ENCODE measurements at regions of chr2 and their contacts with region 1.

Region 1: GRCh38 chr2:21042958-21043743 is 722 bp downstream of the APOB start:
- DNase-seq: peak; percentile 66 to 77 (median 70)
- ATAC-seq: peak; percentile 91
- H3K4me3 ChIP-seq: no peak overlapping the region
- H3K27ac ChIP-seq: no peak overlapping the region
- H3K4me1 ChIP-seq: peaks cover 0 to 8% of the 10 kb centered on the region in 2 experiments; a peak in 1 of 5 replicates
- H3K27me3 ChIP-seq: peaks cover 2 to 26% of the 10 kb centered on the region in 2 experiments; a peak in 4 of 5 replicates
- CTCF ChIP-seq: peak; percentile 84 to 96 (median 94)
- EP300 ChIP-seq: no peak
- POLR2A ChIP-seq: no peak
- RAD21 ChIP-seq: peak; percentile 94 to 97

Region 2: GRCh38 chr2:21055879-21056790 is 13.0 kb after region 1 on chr2:
- CTCF ChIA-PET with region 1: no interaction called
- POLR2A ChIA-PET with region 1: no interaction called
- in situ Hi-C with region 1: no loop called
- intact Hi-C with region 1: no loop called
- DNase-seq: peak in 1 of 4 experiments; percentile 14
- ATAC-seq: no peak; the same call in 2 of the 3 replicates
- H3K4me3 ChIP-seq: no peak overlapping the region
- H3K27ac ChIP-seq: no peak overlapping the region
- H3K4me1 ChIP-seq: no peaks in the 10 kb centered on the region
- H3K27me3 ChIP-seq: no peaks in the 10 kb centered on the region
- CTCF ChIP-seq: no peak
- EP300 ChIP-seq: no peak
- POLR2A ChIP-seq: no peak
- RAD21 ChIP-seq: no peak

Region 3: GRCh38 chr2:21118302-21118920 is 75.3 kb after region 1 on chr2:
- CTCF ChIA-PET with region 1: interaction called, 7 read pairs
- POLR2A ChIA-PET with region 1: no interaction called
- in situ Hi-C with region 1: no loop called
- intact Hi-C with region 1: loop called (anchors 1 kb)
- DNase-seq: peak; percentile 8 to 33 (median 21)
- ATAC-seq: 0 out of 3 replicates have a peak, but pooled peaks have one; percentile 49
- H3K4me3 ChIP-seq: no peak overlapping the region
- H3K27ac ChIP-seq: no peak overlapping the region
- H3K4me1 ChIP-seq: no peaks in the 10 kb centered on the region
- H3K27me3 ChIP-seq: no peaks in the 10 kb centered on the region
- CTCF ChIP-seq: peak in 2 of 3 experiments; percentile 40 to 47; a peak in 3 of 6 replicates
- EP300 ChIP-seq: no peak
- POLR2A ChIP-seq: no peak
- RAD21 ChIP-seq: peak; percentile 73 to 84

Region 4: GRCh38 chr2:21165350-21165749 is 122.2 kb after region 1 on chr2:
- CTCF ChIA-PET with region 1: no interaction called
- POLR2A ChIA-PET with region 1: no interaction called
- in situ Hi-C with region 1: no loop called
- intact Hi-C with region 1: loop called (anchors 1 kb)
- DNase-seq: peak in 1 of 4 experiments; percentile 3
- ATAC-seq: no peak
- H3K4me3 ChIP-seq: no peak overlapping the region
- H3K27ac ChIP-seq: no peak overlapping the region
- H3K4me1 ChIP-seq: no peaks in the 10 kb centered on the region
- H3K27me3 ChIP-seq: no peaks in the 10 kb centered on the region
- CTCF ChIP-seq: peak in 1 of 3 experiments; percentile 28; a peak in 1 of 6 replicates
- EP300 ChIP-seq: no peak
- POLR2A ChIP-seq: no peak
- RAD21 ChIP-seq: peak in 1 of 2 experiments; percentile 49; a peak in 2 of 4 replicates

Region 5: DNA sequence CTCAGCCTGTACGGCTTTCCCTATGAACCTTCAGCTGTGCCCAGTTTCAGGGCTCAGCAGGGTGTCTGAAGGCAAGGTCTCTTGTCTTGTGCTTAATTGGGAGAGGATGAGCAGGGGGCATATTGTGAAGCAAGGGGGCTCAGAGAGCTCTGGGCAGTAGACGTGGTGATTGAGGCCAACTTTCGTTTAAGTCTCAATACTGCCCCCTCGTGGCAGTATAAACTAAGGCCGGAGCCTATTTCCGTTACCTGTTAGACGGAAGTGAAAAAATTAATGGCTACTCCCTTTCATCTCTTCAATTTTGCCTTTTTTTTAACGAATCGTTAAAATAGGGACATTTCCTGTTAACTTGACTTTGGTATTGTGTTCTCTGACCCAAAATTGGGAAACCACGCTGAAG is 274.0 kb after region 1 on chr2:
- CTCF ChIA-PET with region 1: interaction called, 3 read pairs
- POLR2A ChIA-PET with region 1: no interaction called
- in situ Hi-C with region 1: no loop called
- intact Hi-C with region 1: loop called (anchors 2 kb)
- DNase-seq: peak; percentile 66 to 81 (median 68)
- ATAC-seq: peak; percentile 93
- H3K4me3 ChIP-seq: no peak overlapping the region
- H3K27ac ChIP-seq: no peak overlapping the region
- H3K4me1 ChIP-seq: no peaks in the 10 kb centered on the region; a peak in 1 of 5 replicates
- H3K27me3 ChIP-seq: no peaks in the 10 kb centered on the region
- CTCF ChIP-seq: peak; percentile 62 to 75 (median 71)
- EP300 ChIP-seq: no peak
- POLR2A ChIP-seq: no peak
- RAD21 ChIP-seq: peak; percentile 80 to 85

Measured in K562 (cell line).